ENCODE measurements at regions of chr3 and their contacts with region 1.

Region 1: DNA sequence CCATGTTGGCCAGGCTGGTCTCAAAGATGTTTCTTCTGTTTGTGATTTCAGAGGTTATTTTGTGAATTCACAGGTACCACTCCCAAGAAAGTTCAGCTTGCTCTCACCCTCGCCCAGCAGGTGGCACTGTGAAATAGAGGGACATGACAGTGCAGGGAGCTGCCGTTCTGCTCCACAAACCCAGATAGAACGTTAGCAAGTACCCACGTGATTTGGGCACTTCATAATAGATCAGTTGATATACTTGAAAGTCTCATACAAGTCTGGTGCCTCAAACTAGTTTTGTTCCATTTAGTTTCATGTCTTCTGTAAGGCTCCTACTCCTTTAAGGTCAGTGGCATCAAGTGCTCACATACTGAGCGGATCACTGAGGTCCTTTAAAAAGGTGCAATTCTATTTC is 45.5 kb downstream of the FILIP1L start:
- DNase-seq: no peak
- H3K4me3 ChIP-seq: no peak overlapping the region
- H3K27me3 ChIP-seq: no peaks in the 10 kb centered on the region
- CTCF ChIP-seq: peak; percentile 76

Region 2: DNA sequence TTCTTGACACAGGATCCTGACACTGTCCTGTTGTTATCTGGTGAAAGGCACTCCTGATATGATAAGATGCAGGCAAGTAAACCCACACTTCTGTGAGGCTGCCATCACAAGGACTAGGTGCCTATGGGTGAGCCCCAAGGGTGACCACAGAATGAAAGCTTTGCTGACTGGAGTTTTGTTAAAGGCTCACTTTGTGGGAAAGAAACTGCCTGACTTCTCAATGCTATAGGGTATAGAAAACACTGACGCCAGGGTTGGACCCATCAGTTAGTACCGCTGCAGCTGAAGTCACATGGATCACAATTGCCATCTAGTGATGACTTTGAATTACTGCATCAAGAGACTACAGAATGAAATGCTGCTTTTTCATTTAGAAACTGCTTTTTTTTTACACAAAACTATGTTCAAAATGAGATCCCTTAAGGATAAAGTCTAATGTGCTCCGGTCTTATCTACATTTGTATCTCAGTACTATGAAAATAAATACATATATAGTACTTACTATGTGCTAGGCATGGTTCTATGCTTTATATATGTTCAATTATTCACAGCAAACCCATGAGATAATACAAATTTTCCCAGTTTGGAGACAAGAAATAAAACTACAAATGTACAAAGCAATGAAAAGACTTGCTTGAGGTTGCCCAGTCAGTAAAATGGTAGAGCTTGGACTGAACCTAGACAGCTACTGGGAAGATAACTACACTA is 315.4 kb before region 1 on chr3:
- CTCF ChIA-PET with region 1: no interaction called
- POLR2A ChIA-PET with region 1: no interaction called
- DNase-seq: no peak
- H3K4me3 ChIP-seq: no peak overlapping the region
- H3K27me3 ChIP-seq: no peaks in the 10 kb centered on the region
- CTCF ChIP-seq: peak; percentile 70

Region 3: DNA sequence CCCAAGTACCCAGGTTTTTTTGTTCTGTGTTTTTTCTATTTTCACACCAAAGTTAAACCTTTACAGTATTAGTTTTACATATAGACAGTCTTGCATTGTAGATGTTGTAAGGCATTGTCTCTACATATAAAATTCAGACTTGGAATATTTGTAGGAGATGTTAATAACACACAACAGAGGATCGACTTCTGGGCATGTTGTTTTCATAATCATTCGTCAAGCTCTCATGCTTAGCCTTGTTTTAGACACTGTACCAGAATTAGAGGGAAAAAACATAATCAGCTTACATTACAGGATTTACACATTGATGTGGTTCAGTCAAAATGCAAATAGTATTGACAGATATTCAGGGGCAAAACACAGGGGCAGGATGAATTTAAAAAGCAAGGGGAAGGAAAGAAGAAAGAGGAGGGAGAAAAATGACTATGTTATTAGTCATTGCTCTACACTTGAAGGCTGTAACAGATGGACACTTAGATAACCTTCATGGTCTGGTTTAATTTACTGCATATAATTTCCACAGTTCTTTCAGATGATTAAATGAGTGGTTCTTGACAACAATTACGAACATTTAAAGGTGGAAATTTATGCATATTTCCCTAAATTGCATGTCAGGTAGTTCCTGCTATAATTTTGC is 243.7 kb before region 1 on chr3:
- CTCF ChIA-PET with region 1: no interaction called
- POLR2A ChIA-PET with region 1: interaction called, 11 read pairs
- DNase-seq: peak; percentile 4
- H3K4me3 ChIP-seq: no peak overlapping the region
- H3K27me3 ChIP-seq: no peaks in the 10 kb centered on the region
- CTCF ChIP-seq: no peak

Region 4: DNA sequence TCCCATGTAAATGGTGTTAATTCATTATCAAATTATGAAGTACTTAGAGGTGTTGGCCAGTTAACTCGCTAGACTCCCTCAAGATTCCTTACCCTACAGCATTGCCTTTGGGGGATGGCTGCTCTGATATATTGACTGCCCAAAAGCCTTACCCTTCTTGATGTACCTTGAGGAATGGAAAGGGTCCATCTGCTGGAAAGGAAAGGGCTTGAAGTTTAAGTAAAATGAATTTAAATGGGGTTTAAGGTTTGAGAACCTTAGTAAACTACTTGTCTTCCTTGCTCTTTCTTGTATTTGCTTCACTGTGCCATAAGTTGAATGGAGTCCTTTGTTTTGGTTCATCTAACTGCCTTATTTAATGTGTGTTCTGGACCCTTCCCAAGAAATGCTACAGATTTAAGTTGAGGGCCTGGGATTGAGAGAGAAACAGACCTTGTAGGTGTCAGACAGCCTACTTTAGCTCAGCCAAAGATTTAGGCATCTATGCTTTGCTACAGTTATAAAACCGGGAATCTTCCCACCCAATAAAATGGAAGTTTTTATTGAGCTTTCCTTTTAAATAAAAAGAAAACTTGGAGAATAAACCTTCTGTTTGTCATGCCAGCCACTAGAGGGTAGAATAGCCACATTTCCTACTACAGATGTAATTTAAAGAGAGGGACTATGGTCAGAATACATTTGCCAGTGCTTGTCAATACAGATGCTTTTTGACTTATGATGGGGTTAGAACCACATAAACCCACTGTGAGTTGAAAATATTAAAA is 225.8 kb before region 1 on chr3:
- CTCF ChIA-PET with region 1: interaction called, 11 read pairs
- POLR2A ChIA-PET with region 1: no interaction called
- DNase-seq: no peak
- H3K4me3 ChIP-seq: no peak overlapping the region
- H3K27me3 ChIP-seq: no peaks in the 10 kb centered on the region
- CTCF ChIP-seq: peak; percentile 70

Region 5: GRCh38 chr3:99875929-99876841 is 192.6 kb before region 1 on chr3:
- CTCF ChIA-PET with region 1: no interaction called
- POLR2A ChIA-PET with region 1: no interaction called
- DNase-seq: no peak
- H3K4me3 ChIP-seq: peak overlapping the region; percentile 76
- H3K27me3 ChIP-seq: no peaks in the 10 kb centered on the region
- CTCF ChIP-seq: no peak

Region 6: GRCh38 chr3:100057716-100058575 is 10.9 kb before region 1 on chr3:
- CTCF ChIA-PET with region 1: interaction called, 20 read pairs
- POLR2A ChIA-PET with region 1: no interaction called
- DNase-seq: no peak
- H3K4me3 ChIP-seq: no peak overlapping the region
- H3K27me3 ChIP-seq: no peaks in the 10 kb centered on the region
- CTCF ChIP-seq: no peak

Region 7: GRCh38 chr3:100103558-100104441 is 35.0 kb after region 1 on chr3:
- CTCF ChIA-PET with region 1: interaction called, 5 read pairs
- POLR2A ChIA-PET with region 1: interaction called, 10 read pairs
- DNase-seq: peak; percentile 53
- H3K4me3 ChIP-seq: no peak overlapping the region
- H3K27me3 ChIP-seq: no peaks in the 10 kb centered on the region
- CTCF ChIP-seq: no peak

Region 8: GRCh38 chr3:100254168-100254777 is 185.4 kb after region 1 on chr3:
- CTCF ChIA-PET with region 1: interaction called, 38 read pairs
- POLR2A ChIA-PET with region 1: interaction called, 10 read pairs
- DNase-seq: no peak
- H3K4me3 ChIP-seq: no peak overlapping the region
- H3K27me3 ChIP-seq: no peaks in the 10 kb centered on the region
- CTCF ChIP-seq: peak; percentile 77

Measured in BJ (cell line).